Heart right ventricle (tissue), 16 donors: ENCODE measurements at regions of chr3 and their contacts with region 1.

Region 1: DNA sequence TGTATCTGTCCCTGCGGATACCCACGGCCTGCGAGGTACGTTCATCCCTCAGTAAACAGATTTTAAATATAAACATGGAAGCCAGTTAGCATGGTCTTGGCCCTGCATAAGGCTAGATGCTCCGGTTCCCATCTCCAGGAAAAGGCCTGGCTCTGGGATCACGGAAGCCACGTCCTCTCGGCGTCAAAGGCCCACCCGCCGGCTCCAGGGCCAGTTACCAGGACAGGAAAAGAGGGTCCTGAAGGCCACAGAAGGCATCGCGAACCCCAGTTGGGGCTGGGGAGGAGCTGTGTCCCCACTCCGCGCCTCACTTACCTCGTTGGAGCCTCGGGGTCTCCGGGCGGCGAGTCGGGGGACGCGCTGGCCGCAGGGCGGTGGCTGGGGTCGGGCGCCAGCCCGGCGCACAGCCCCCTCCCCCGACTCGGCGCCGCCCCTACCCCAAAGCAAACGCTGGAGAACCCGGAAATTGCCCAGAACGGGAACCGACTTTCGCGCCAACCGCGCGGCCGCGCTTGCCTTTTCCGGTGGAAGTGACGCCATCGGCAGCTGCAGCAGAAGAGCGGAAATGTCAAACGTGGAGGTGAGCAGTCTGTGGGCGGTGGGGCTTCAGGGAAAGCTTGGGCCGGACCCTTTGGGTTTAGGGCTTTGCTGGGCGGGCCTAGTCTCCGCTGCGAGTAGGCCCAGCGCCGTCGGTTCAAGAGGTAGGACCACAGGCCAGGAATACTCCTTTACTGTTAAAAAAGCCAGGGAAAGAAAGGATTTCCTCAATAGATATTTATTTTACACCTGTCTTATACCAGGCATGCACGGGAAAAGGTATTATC is at the start of gene TOPBP1:
- DNase-seq: peak; percentile 81 to 84
- ATAC-seq: peak; percentile 86 to 95 (median 93)
- H3K4me3 ChIP-seq: peak within 1 kb of the TSS; percentile 45 to 91 (median 84)
- H3K27ac ChIP-seq: peak within 1 kb of the TSS; percentile 46 to 92 (median 85)
- H3K4me1 ChIP-seq: peaks cover 0 to 30% (median 25%) of the 10 kb centered on the region in 9 donors
- H3K27me3 ChIP-seq: no peaks in the 10 kb centered on the region
- CTCF ChIP-seq: no peak
- total RNA-seq, gene TOPBP1: 7.3 to 11.8 (median 11.3) TPM

Region 2: DNA sequence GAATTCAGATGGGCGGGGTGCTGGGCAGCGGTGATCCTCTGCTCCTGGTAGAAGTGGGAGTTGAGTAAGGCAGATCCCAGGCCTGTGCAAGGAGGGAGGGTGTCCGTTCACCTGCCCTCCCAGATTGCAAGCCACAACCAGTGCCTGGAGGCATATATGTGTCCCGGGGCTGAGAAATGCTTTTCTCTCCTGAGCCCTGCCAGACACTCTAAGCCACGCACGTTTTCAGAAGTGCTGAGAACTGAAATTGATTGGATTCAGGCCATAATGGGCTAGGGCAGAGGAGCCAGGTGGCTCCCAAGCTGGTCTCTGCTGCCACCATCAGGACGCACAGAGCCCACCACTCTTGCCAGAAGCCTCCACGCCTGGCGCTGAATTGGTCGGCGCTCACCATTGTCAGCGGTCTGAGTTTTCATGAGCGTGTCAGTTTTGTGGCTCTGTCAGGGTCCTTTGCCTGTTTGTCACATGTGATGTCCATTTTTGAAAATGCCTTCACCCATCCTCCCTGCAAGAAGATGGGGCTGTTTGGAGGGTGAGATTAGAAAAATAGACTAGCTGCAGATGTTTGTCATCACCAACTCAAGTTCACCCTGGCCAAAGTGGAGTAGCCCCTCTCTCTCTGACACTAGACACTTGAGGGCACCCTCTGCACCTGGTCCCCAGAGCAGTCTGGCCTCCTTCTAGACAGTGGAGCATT is 277.2 kb before region 1 on chr3:
- intact Hi-C with region 1: no loop called
- DNase-seq: peak; percentile 55 to 60
- ATAC-seq: peak; percentile 87 to 93 (median 89)
- H3K4me3 ChIP-seq: no peak overlapping the region
- H3K27ac ChIP-seq: no peak overlapping the region
- H3K4me1 ChIP-seq: peaks cover 0 to 7% (median 0%) of the 10 kb centered on the region in 9 donors
- H3K27me3 ChIP-seq: peaks cover 0 to 9% (median 0%) of the 10 kb centered on the region in 7 donors
- CTCF ChIP-seq: peak; percentile 46 to 86 (median 78)

Region 3: GRCh38 chr3:133578548-133579191 is 83.0 kb before region 1 on chr3:
- intact Hi-C with region 1: loop called in 1 of 10 experiments (anchors 5 kb)
- DNase-seq: no peak
- ATAC-seq: no peak
- H3K4me3 ChIP-seq: no peak overlapping the region
- H3K27ac ChIP-seq: no peak overlapping the region
- H3K4me1 ChIP-seq: peaks cover 10 to 67% (median 61%) of the 10 kb centered on the region in 9 donors
- H3K27me3 ChIP-seq: no peaks in the 10 kb centered on the region
- CTCF ChIP-seq: peak in 8 of 9 donors; percentile 20 to 63 (median 44)

Region 4: GRCh38 chr3:133776794-133777438 is 115.2 kb after region 1 on chr3:
- intact Hi-C with region 1: no loop called
- DNase-seq: no peak
- ATAC-seq: no peak
- H3K4me3 ChIP-seq: no peak overlapping the region
- H3K27ac ChIP-seq: no peak overlapping the region
- H3K4me1 ChIP-seq: no peaks in the 10 kb centered on the region
- H3K27me3 ChIP-seq: peaks cover 0 to 10% (median 0%) of the 10 kb centered on the region in 7 donors
- CTCF ChIP-seq: no peak

Region 5: DNA sequence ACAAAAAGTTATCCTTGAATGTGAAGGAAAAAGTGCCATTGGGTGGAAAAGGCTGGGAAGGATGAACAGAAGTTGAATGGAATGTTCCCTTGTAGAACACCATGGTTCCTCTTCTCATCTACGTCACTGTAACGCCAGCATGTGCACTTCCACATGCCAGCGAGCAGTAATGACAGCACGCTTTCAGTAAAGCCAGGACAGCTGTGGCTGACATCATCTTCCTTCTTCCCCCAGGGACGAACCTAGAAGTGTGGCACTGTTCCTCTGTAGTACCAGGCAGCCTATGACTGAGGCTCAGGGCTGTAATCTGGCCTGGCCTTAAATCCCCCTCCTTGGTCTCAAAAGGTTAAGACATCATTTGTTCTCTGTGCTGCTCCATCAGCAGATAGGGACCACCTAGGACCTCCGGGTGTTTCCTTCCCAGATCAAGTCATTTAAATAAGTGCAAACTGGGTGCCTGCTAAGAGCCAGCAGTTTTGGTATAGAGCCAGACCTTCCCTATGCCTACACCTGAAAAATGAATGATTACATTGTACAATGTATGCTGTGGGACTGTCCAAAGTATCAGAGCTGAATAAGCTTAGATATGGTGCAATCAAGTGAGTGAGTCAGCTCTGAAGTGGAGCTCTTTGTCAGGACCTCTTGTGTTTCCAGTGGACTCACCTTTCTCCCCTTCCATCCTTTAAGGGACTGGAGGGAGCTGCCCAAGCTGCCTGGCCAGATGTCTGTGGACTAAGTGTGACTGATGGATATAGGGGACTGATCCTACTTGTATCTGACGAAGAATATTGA is 138.3 kb after region 1 on chr3:
- intact Hi-C with region 1: loop called in 5 of 10 experiments (anchors 5 to 10 kb)
- DNase-seq: no peak
- ATAC-seq: peak in 5 of 8 donors; percentile 21 to 78 (median 67)
- H3K4me3 ChIP-seq: no peak overlapping the region
- H3K27ac ChIP-seq: no peak overlapping the region
- H3K4me1 ChIP-seq: peaks cover 0 to under 1% (median 0%) of the 10 kb centered on the region in 9 donors
- H3K27me3 ChIP-seq: peaks cover 0 to 24% (median 15%) of the 10 kb centered on the region in 7 donors
- CTCF ChIP-seq: no peak

Region 6: DNA sequence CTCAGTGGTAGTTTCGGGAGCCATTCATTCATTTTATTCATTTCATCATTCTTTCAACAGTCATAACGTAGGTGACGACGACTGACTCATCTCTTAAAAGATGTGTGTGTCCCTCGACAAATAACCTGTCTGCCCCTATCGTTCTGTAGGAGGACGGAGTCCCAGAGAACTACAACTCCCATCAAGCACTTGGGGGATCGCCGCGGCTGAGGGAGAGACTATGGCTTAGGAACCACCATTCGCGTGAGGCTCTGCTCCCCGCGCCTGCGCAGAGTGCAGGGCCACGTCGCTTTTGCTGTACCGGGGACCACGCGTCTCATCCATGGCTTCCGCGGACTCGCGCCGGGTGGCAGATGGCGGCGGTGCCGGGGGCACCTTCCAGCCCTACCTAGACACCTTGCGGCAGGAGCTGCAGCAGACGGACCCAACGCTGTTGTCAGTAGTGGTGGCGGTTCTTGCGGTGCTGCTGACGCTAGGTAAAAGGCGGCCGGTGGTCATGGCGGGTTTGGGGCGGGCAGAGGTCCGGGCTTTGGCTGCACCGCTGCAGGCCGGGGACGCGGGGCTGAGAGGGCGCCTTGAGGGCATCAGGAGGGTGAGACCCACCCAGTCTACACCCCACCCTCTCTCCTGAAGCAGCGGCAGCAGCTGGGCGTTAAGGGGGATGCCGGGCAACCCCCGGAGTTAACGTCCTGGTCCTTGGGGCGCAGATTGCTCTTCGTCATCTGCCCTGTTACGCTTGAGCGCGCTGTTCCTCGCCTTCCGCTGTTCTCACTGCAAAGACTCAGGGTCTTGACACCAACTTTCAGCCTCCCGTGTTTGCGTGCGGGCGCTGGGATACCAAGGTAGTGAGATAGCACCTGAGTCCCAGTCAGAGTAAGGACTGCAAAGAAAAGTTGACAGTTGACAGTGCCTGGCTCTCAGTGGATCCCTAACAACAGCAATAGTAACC is 144.1 kb after region 1 on chr3 and contains the start of gene SRPRB:
- intact Hi-C with region 1: loop called in 7 of 10 experiments (anchors 5 to 10 kb)
- DNase-seq: peak; percentile 95 to 96
- ATAC-seq: peak; percentile 100
- H3K4me3 ChIP-seq: peak within 1 kb of the TSS; percentile 45 to 99 (median 88)
- H3K27ac ChIP-seq: peak within 1 kb of the TSS in 9 of 10 donors; percentile 17 to 86 (median 73)
- H3K4me1 ChIP-seq: peaks cover 0 to 21% (median 12%) of the 10 kb centered on the region in 9 donors
- H3K27me3 ChIP-seq: peaks cover 0 to 7% (median 0%) of the 10 kb centered on the region in 7 donors
- CTCF ChIP-seq: no peak
- total RNA-seq, gene SRPRB: 24.0 to 42.1 (median 27.0) TPM

Region 7: GRCh38 chr3:133812872-133813271 is 151.2 kb after region 1 on chr3:
- intact Hi-C with region 1: loop called in 6 of 10 experiments (anchors 5 to 10 kb)
- DNase-seq: no peak
- ATAC-seq: peak in 2 of 8 donors; percentile 37 to 60
- H3K4me3 ChIP-seq: no peak overlapping the region
- H3K27ac ChIP-seq: no peak overlapping the region
- H3K4me1 ChIP-seq: peaks cover 0 to 8% (median 0%) of the 10 kb centered on the region in 9 donors
- H3K27me3 ChIP-seq: no peaks in the 10 kb centered on the region
- CTCF ChIP-seq: no peak

Region 8: GRCh38 chr3:133895208-133896001 is 233.7 kb after region 1 on chr3 and contains the start of gene RAB6B:
- intact Hi-C with region 1: loop called in 1 of 10 experiments (anchors 10 kb)
- DNase-seq: peak; percentile 46 to 64
- ATAC-seq: peak; percentile 70 to 89 (median 82)
- H3K4me3 ChIP-seq: peak within 1 kb of the TSS; percentile 44 to 90 (median 70)
- H3K27ac ChIP-seq: peak within 1 kb of the TSS in 9 of 10 donors; percentile 31 to 73 (median 51)
- H3K4me1 ChIP-seq: peaks cover 14 to 49% (median 23%) of the 10 kb centered on the region in 9 donors
- H3K27me3 ChIP-seq: peaks cover 0 to 52% (median 8%) of the 10 kb centered on the region in 7 donors
- CTCF ChIP-seq: no peak
- total RNA-seq, gene RAB6B: 39.2 to 73.8 (median 47.4) TPM

Region 9: GRCh38 chr3:134485718-134486576 is 824.3 kb after region 1 on chr3 and contains the starts of genes ANAPC13 and CEP63:
- intact Hi-C with region 1: loop called in 1 of 10 experiments (anchors 5 kb)
- DNase-seq: peak; percentile 88 to 97
- ATAC-seq: peak; percentile 91 to 97 (median 94)
- H3K4me3 ChIP-seq: peak within 1 kb of the TSS; percentile 71 to 94 (median 79)
- H3K27ac ChIP-seq: peak within 1 kb of the TSS; percentile 93 to 99 (median 96)
- H3K4me1 ChIP-seq: peaks cover 11 to 53% (median 40%) of the 10 kb centered on the region in 9 donors
- H3K27me3 ChIP-seq: no peaks in the 10 kb centered on the region
- CTCF ChIP-seq: no peak
- total RNA-seq, gene ANAPC13: 68.2 to 119 (median 84.0) TPM
- total RNA-seq, gene CEP63: 27.6 to 38.8 (median 31.0) TPM